ENCODE measurements at regions of chr7 and their contacts with region 1.

Region 1: GRCh38 chr7:150368096-150368883 is at the start of gene REPIN1:
- DNase-seq: peak; percentile 94 to 97 (median 95)
- H3K4me3 ChIP-seq: peak within 1 kb of the TSS; percentile 62 to 91 (median 68)
- H3K27ac ChIP-seq: peak within 1 kb of the TSS; percentile 61 to 99 (median 97)
- H3K4me1 ChIP-seq: peaks cover 20 to 28% of the 10 kb centered on the region in 2 donors
- H3K27me3 ChIP-seq: no peaks in the 10 kb centered on the region
- CTCF ChIP-seq: no peak
- POLR2A ChIP-seq: peak; percentile 53 to 85
- total RNA-seq, gene REPIN1: 47.5 to 294 (median 208) TPM

Region 2: GRCh38 chr7:150335108-150335773 is 33.0 kb before region 1 on chr7:
- intact Hi-C with region 1: loop called in 1 of 2 experiments (anchors 5 kb)
- DNase-seq: peak in 3 of 7 donors; percentile 47 to 63 (median 52)
- H3K4me3 ChIP-seq: no peak overlapping the region
- H3K27ac ChIP-seq: peak overlapping the region in 4 of 5 donors; percentile 20 to 91 (median 88)
- H3K4me1 ChIP-seq: peaks cover 29 to 42% of the 10 kb centered on the region in 2 donors
- H3K27me3 ChIP-seq: no peaks in the 10 kb centered on the region
- CTCF ChIP-seq: no peak
- POLR2A ChIP-seq: no peak

Region 3: DNA sequence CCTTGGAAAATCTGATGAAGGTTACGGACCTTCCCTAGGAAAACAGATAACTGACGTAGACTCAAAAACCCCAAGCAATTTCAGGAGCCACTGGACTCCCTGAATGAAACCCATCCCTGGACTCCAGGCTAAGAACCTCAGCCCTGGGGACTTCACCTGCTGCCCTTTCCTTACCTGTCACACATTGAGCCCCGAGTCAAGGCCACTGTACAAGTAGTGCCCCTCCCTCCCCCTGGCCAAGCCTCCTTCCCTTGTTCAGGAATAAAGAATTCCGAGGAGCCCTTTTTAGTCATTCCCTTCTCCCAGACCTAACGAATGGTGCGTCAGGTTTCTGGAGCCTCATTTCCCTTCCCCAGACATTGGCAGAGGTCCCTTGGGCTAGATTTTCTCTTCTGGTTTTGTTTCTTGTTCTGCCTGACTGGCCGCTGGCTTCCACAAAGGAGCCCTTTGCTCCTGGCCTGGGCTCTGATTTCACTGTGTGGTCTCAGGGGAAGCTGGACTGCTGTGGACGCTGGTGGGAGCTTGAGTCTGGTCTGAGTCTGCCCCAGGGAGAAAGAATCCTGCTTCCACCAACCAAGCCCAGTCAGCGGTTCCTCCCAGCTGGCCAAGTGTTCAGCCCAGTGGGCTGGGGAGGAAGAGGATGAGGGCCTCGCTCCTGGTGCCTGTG is 42.5 kb after region 1 on chr7:
- intact Hi-C with region 1: loop called in 1 of 2 experiments (anchors 2 kb)
- DNase-seq: no peak
- H3K4me3 ChIP-seq: no peak overlapping the region
- H3K27ac ChIP-seq: no peak overlapping the region
- H3K4me1 ChIP-seq: peaks cover 9 to 19% of the 10 kb centered on the region in 2 donors
- H3K27me3 ChIP-seq: no peaks in the 10 kb centered on the region
- CTCF ChIP-seq: no peak
- POLR2A ChIP-seq: no peak

Measured in adrenal gland (tissue), 19 donors.